OCI-LY7 (cell line): ENCODE measurements at regions of chr2 and their contacts with region 1.

Region 1: GRCh38 chr2:38572167-38572566 is 30.6 kb downstream of the HNRNPLL start:
- DNase-seq: no peak
- H3K4me3 ChIP-seq: no peak overlapping the region
- H3K27ac ChIP-seq: no peak overlapping the region
- H3K4me1 ChIP-seq: no peaks in the 10 kb centered on the region
- CTCF ChIP-seq: no peak

Region 2: GRCh38 chr2:38159597-38159996 is 412.6 kb before region 1 on chr2:
- CTCF ChIA-PET with region 1: no interaction called
- POLR2A ChIA-PET with region 1: no interaction called
- intact Hi-C with region 1: no loop called
- DNase-seq: no peak
- H3K4me3 ChIP-seq: no peak overlapping the region
- H3K27ac ChIP-seq: no peak overlapping the region
- H3K4me1 ChIP-seq: no peaks in the 10 kb centered on the region
- CTCF ChIP-seq: no peak

Region 3: GRCh38 chr2:38394903-38395341 is 177.2 kb before region 1 on chr2:
- CTCF ChIA-PET with region 1: no interaction called
- POLR2A ChIA-PET with region 1: no interaction called
- intact Hi-C with region 1: no loop called
- DNase-seq: no peak
- H3K4me3 ChIP-seq: peak overlapping the region; percentile 19
- H3K27ac ChIP-seq: no peak overlapping the region
- H3K4me1 ChIP-seq: peaks cover 32% of the 10 kb centered on the region
- CTCF ChIP-seq: no peak

Region 4: GRCh38 chr2:38462109-38462759 is 109.9 kb before region 1 on chr2:
- CTCF ChIA-PET with region 1: no interaction called
- POLR2A ChIA-PET with region 1: no interaction called
- intact Hi-C with region 1: no loop called
- DNase-seq: no peak
- H3K4me3 ChIP-seq: no peak overlapping the region
- H3K27ac ChIP-seq: no peak overlapping the region
- H3K4me1 ChIP-seq: peaks cover 15% of the 10 kb centered on the region
- CTCF ChIP-seq: no peak

Region 5: DNA sequence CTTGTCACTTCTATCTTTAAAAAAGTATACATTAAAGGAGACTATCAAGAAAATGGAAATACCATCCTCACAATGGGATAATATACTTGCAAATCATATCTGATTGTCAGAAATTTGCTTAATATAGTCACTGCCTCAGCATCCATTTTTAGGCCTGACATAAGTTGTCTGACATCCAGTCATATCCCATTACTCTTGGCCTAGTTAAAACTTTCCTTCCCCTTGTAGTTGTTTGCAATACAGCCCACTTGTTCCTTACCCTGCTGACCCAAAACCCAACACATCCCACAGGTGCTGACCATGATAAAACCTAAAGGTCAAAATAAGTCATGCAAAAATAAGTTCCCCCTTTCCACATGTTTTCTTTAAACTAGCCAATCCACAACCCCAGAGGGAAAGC is 313.9 kb after region 1 on chr2:
- CTCF ChIA-PET with region 1: no interaction called
- POLR2A ChIA-PET with region 1: interaction called, 10 read pairs
- intact Hi-C with region 1: no loop called
- DNase-seq: no peak
- H3K4me3 ChIP-seq: no peak overlapping the region
- H3K27ac ChIP-seq: no peak overlapping the region
- H3K4me1 ChIP-seq: no peaks in the 10 kb centered on the region
- CTCF ChIP-seq: no peak